IMR-90 (cell line): ENCODE measurements at regions of chr11 and their contacts with region 1.

Region 1: GRCh38 chr11:104512386-104512785 is 348.4 kb upstream of the PDGFD start:
- DNase-seq: no peak
- ATAC-seq: no peak
- H3K4me3 ChIP-seq: no peak overlapping the region
- H3K27ac ChIP-seq: no peak overlapping the region
- H3K4me1 ChIP-seq: no peaks in the 10 kb centered on the region
- H3K27me3 ChIP-seq: no peaks in the 10 kb centered on the region
- CTCF ChIP-seq: no peak
- POLR2A ChIP-seq: no peak
- RAD21 ChIP-seq: no peak

Region 2: GRCh38 chr11:103994094-103994493 is 518.3 kb before region 1 on chr11:
- CTCF ChIA-PET with region 1: no interaction called
- POLR2A ChIA-PET with region 1: no interaction called
- dilution Hi-C with region 1: no loop called
- in situ Hi-C with region 1: no loop called
- intact Hi-C with region 1: loop called (anchors 5 kb)
- DNase-seq: no peak
- ATAC-seq: no peak; the same call in 1 of the 2 replicates
- H3K4me3 ChIP-seq: no peak overlapping the region
- H3K27ac ChIP-seq: peak overlapping the region; percentile 55; the same call in 1 of the 2 replicates
- H3K4me1 ChIP-seq: peaks cover 9% of the 10 kb centered on the region; the same call in 1 of the 2 replicates
- H3K27me3 ChIP-seq: no peaks in the 10 kb centered on the region
- CTCF ChIP-seq: no peak
- POLR2A ChIP-seq: no peak
- RAD21 ChIP-seq: no peak

Region 3: DNA sequence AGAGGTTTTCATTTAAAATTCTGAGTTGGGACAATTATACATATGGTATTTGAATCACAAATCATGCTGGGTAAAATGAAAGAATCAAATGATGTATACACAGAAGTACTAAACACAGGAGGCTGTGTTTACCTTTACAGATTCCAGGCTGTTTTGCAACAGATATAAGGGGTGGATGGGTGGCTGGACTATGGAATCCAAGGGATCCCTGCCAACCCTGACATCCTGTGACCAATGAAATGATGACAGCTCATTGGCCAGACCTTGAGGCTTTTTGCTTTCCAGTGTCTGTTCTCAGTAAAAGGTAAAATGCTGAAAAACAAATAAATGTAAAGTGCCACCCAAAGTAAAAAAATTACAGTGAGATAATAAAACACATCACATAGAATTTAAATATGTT is 479.3 kb before region 1 on chr11:
- CTCF ChIA-PET with region 1: no interaction called
- POLR2A ChIA-PET with region 1: no interaction called
- dilution Hi-C with region 1: no loop called
- in situ Hi-C with region 1: no loop called
- intact Hi-C with region 1: no loop called
- DNase-seq: peak; percentile 97
- ATAC-seq: peak; percentile 97
- H3K4me3 ChIP-seq: no peak overlapping the region
- H3K27ac ChIP-seq: peak overlapping the region; percentile 100; the same call in 1 of the 2 replicates
- H3K4me1 ChIP-seq: peaks cover 4% of the 10 kb centered on the region
- H3K27me3 ChIP-seq: no peaks in the 10 kb centered on the region
- CTCF ChIP-seq: no peak
- POLR2A ChIP-seq: no peak
- RAD21 ChIP-seq: no peak

Region 4: GRCh38 chr11:104219096-104219495 is 293.3 kb before region 1 on chr11:
- CTCF ChIA-PET with region 1: no interaction called
- POLR2A ChIA-PET with region 1: no interaction called
- dilution Hi-C with region 1: no loop called
- in situ Hi-C with region 1: no loop called
- intact Hi-C with region 1: no loop called
- DNase-seq: peak; percentile 13
- ATAC-seq: peak; percentile 27; the same call in 1 of the 2 replicates
- H3K4me3 ChIP-seq: no peak overlapping the region
- H3K27ac ChIP-seq: no peak overlapping the region
- H3K4me1 ChIP-seq: no peaks in the 10 kb centered on the region
- H3K27me3 ChIP-seq: no peaks in the 10 kb centered on the region
- CTCF ChIP-seq: no peak
- POLR2A ChIP-seq: no peak
- RAD21 ChIP-seq: no peak